Transverse colon (tissue), 4 donors: ENCODE measurements at regions of chr2 and their contacts with region 1.

Region 1: DNA sequence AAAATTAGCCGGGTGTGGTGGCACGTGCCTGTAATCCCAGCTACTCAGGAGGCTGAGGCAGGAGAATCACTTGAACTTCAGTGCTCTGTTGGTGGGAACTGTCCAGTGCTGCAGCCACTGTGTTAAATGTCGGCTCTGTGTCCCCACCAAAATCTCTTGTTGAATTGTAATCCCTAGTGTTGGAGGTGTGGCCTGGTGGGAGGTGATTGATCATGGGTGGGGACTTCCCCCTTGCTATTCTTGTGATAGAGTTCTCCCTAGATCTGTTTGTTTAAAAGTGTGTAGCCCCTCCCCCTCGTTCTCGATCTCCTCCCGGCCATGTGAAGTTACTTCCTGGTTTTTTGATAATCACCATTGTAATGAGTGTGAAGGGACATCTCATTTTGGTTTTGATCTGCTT is 9.8 kb upstream of the RPL31 start:
- DNase-seq: no peak
- H3K4me3 ChIP-seq: no peak overlapping the region
- H3K27ac ChIP-seq: no peak overlapping the region
- H3K4me1 ChIP-seq: no peaks in the 10 kb centered on the region
- H3K27me3 ChIP-seq: no peaks in the 10 kb centered on the region
- CTCF ChIP-seq: no peak
- EP300 ChIP-seq: no peak
- POLR2A ChIP-seq: no peak

Region 2: GRCh38 chr2:100610381-100610831 is 381.9 kb before region 1 on chr2:
- in situ Hi-C with region 1: loop called (anchors 10 to 25 kb)
- intact Hi-C with region 1: loop called (anchors 5 kb)
- DNase-seq: peak; percentile 54
- H3K4me3 ChIP-seq: no peak overlapping the region
- H3K27ac ChIP-seq: no peak overlapping the region
- H3K4me1 ChIP-seq: no peaks in the 10 kb centered on the region
- H3K27me3 ChIP-seq: no peaks in the 10 kb centered on the region
- CTCF ChIP-seq: peak; percentile 29 to 54 (median 39)
- EP300 ChIP-seq: no peak
- POLR2A ChIP-seq: no peak

Region 3: GRCh38 chr2:101113396-101114267 is 121.4 kb after region 1 on chr2:
- in situ Hi-C with region 1: no loop called
- intact Hi-C with region 1: no loop called
- DNase-seq: peak; percentile 30
- H3K4me3 ChIP-seq: peak overlapping the region in 1 of 4 donors; percentile 8
- H3K27ac ChIP-seq: peak overlapping the region; percentile 46 to 73 (median 72)
- H3K4me1 ChIP-seq: peaks cover 16 to 69% (median 46%) of the 10 kb centered on the region in 4 donors
- H3K27me3 ChIP-seq: no peaks in the 10 kb centered on the region
- CTCF ChIP-seq: no peak
- EP300 ChIP-seq: no peak
- POLR2A ChIP-seq: no peak

Region 4: DNA sequence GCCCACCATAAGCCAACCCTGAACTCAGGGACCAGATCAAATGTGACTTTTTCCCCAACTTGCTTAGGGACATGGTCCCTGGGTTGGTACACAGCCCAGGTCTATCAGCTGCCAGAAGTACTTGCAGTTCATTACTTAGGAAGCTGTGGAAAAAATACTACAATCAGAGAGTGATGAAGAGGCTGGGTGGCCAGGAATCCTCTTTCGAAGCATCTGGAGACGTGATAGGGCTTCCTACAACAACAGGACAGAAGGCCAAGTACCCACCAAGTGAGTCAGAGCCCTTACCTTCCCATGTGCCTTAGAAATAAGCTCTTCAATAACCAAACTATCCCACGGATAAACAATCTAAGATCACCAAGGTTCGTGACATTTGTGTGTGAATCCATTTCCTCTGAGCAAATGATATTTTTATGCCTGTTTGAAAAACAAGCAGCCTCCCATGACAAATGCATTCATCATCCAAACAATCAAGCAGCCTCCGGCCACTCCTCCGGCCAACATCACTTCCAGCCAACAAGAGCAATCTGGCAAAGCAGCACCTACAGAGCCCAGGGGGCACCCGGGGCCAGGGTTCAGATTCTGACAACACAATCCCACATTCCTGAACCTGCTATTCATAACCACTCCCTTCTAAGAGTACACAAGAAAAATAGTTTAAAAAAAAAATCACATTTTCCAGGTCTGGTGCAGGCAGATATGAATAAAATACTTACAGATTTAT is 132.5 kb after region 1 on chr2:
- in situ Hi-C with region 1: no loop called
- intact Hi-C with region 1: no loop called
- DNase-seq: peak; percentile 71
- H3K4me3 ChIP-seq: peak overlapping the region in 1 of 4 donors; percentile 9
- H3K27ac ChIP-seq: peak overlapping the region; percentile 19 to 74 (median 62)
- H3K4me1 ChIP-seq: peaks cover 26 to 64% (median 43%) of the 10 kb centered on the region in 4 donors
- H3K27me3 ChIP-seq: no peaks in the 10 kb centered on the region
- CTCF ChIP-seq: no peak
- EP300 ChIP-seq: no peak
- POLR2A ChIP-seq: peak; percentile 16